B cell (primary cell): ENCODE measurements at regions of chr19 and their contacts with region 1.

Region 1: DNA sequence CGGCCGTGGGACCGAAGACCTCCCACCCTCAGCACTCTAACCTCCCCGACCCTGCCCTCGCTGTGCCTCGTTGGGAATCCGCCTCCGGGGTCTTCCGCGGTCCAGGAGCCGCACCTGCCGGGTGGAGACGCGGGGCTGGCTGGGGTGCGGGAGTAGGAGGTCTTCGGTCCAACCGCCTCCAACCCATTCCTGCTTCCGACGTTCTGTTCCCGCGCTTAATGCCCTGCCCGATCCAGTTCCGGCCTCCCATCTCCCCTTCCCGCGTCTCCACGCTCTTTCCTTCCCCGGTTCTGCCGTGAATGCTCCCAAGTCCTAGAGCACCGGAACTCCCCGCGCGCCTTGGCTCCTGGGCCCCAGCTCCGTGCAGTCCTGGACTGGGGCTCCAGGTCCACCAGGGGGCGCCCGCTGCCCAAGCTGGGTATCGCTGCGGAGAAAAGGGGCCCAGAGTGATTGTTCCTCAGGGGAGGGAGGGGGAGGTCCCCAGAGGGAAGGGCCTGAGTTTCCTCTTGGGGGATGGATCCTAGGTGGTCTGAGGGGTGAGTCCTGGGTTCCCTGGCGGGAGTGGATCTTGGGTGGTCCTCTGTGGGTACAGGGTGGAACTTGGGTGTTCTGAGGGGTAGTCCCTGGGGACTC is 14.1 kb upstream of the TNFSF9 start:
- DNase-seq: peak; percentile 91
- ATAC-seq: peak; percentile 58
- H3K4me3 ChIP-seq: peak overlapping the region; percentile 31 to 74 (median 68)
- H3K4me3 Mint-ChIP-seq: peak overlapping the region; percentile 92
- H3K27ac ChIP-seq: peak overlapping the region in 1 of 2 donors; percentile 16
- H3K27ac Mint-ChIP-seq: peak overlapping the region; percentile 73
- H3K4me1 ChIP-seq: peaks cover 22 to 47% of the 10 kb centered on the region in 2 donors
- H3K4me1 Mint-ChIP-seq: peaks cover 38% of the 10 kb centered on the region
- H3K27me3 ChIP-seq: no peaks in the 10 kb centered on the region
- H3K27me3 Mint-ChIP-seq: no peaks in the 10 kb centered on the region
- CTCF ChIP-seq: peak; percentile 97

Region 2: GRCh38 chr19:6343462-6343861 is 173.3 kb before region 1 on chr19:
- CTCF ChIA-PET with region 1: no interaction called
- POLR2A ChIA-PET with region 1: no interaction called
- intact Hi-C with region 1: no loop called
- DNase-seq: no peak
- ATAC-seq: no peak
- H3K4me3 ChIP-seq: no peak overlapping the region
- H3K4me3 Mint-ChIP-seq: no peak overlapping the region
- H3K27ac ChIP-seq: no peak overlapping the region
- H3K27ac Mint-ChIP-seq: no peak overlapping the region
- H3K4me1 ChIP-seq: peaks cover 0 to 3% of the 10 kb centered on the region in 2 donors
- H3K4me1 Mint-ChIP-seq: peaks cover 3% of the 10 kb centered on the region
- H3K27me3 ChIP-seq: no peaks in the 10 kb centered on the region
- H3K27me3 Mint-ChIP-seq: no peaks in the 10 kb centered on the region
- CTCF ChIP-seq: no peak

Region 3: DNA sequence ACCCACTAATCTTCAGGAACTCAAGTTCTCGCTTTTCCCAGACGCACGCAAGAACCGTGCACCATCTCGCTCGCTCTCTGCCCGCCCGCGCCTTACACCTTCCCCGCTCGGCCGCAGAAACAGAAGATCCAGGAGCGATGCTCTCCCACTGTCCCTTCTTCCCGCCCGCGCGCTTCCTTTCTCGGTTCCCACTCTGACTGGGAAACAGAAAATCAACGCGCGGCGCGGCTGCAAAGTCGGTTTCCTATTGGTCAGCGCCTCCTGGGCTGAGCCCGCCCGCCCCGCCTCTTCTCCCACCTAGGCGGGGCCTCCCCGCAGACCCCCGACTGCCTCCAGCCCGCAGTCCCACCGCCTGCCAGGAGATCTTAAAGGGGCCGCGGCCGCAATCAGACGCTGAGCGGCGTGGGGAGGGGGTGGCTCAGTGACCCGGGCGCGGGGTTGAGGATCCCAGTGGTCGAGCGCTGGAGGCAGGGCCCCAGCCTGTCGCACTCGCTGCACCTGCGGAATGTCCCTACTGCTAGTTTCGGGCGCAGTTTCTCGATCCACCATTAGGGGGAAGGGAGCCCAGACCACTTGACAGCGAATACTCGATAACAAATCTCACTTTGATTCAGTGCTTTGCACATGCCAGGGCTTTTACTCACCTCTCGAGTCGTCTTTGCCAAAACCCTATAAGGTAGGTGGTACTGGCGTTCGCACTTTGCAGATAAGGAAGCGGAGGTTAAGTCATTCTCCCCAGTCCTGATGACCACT is 56.5 kb before region 1 on chr19:
- CTCF ChIA-PET with region 1: interaction called, 3 read pairs
- POLR2A ChIA-PET with region 1: interaction called, 6 read pairs
- intact Hi-C with region 1: loop called (anchors 1 kb)
- DNase-seq: peak; percentile 99
- ATAC-seq: peak; percentile 84
- H3K4me3 ChIP-seq: peak overlapping the region; percentile 60 to 93 (median 78)
- H3K4me3 Mint-ChIP-seq: peak overlapping the region; percentile 91
- H3K27ac ChIP-seq: peak overlapping the region; percentile 76 to 86
- H3K27ac Mint-ChIP-seq: peak overlapping the region; percentile 78
- H3K4me1 ChIP-seq: peaks cover 11 to 34% of the 10 kb centered on the region in 2 donors
- H3K4me1 Mint-ChIP-seq: peaks cover 32% of the 10 kb centered on the region
- H3K27me3 ChIP-seq: peaks cover 0 to 15% (median 6%) of the 10 kb centered on the region in 4 experiments
- H3K27me3 Mint-ChIP-seq: no peaks in the 10 kb centered on the region
- CTCF ChIP-seq: peak; percentile 78

Region 4: GRCh38 chr19:6551607-6552450 is 35.1 kb after region 1 on chr19:
- CTCF ChIA-PET with region 1: interaction called, 16 read pairs
- POLR2A ChIA-PET with region 1: interaction called, 4 read pairs
- intact Hi-C with region 1: loop called (anchors 5 kb)
- DNase-seq: peak; percentile 60
- ATAC-seq: peak; percentile 92
- H3K4me3 ChIP-seq: peak overlapping the region in 2 of 5 experiments; percentile 20 to 36
- H3K4me3 Mint-ChIP-seq: peak overlapping the region; percentile 59
- H3K27ac ChIP-seq: no peak overlapping the region
- H3K27ac Mint-ChIP-seq: peak overlapping the region; percentile 53
- H3K4me1 ChIP-seq: peaks cover 9 to 11% of the 10 kb centered on the region in 2 donors
- H3K4me1 Mint-ChIP-seq: peaks cover 7% of the 10 kb centered on the region
- H3K27me3 ChIP-seq: peaks cover 0 to 2% (median 0%) of the 10 kb centered on the region in 4 experiments
- H3K27me3 Mint-ChIP-seq: no peaks in the 10 kb centered on the region
- CTCF ChIP-seq: peak; percentile 47

Region 5: GRCh38 chr19:6608940-6609339 is 92.2 kb after region 1 on chr19:
- CTCF ChIA-PET with region 1: interaction called, 5 read pairs
- POLR2A ChIA-PET with region 1: interaction called, 10 read pairs
- intact Hi-C with region 1: no loop called
- DNase-seq: no peak
- ATAC-seq: no peak
- H3K4me3 ChIP-seq: no peak overlapping the region
- H3K4me3 Mint-ChIP-seq: no peak overlapping the region
- H3K27ac ChIP-seq: no peak overlapping the region
- H3K27ac Mint-ChIP-seq: no peak overlapping the region
- H3K4me1 ChIP-seq: peaks cover 0 to 2% of the 10 kb centered on the region in 2 donors
- H3K4me1 Mint-ChIP-seq: peaks cover 7% of the 10 kb centered on the region
- H3K27me3 ChIP-seq: peaks cover 0 to 12% (median 3%) of the 10 kb centered on the region in 4 experiments
- H3K27me3 Mint-ChIP-seq: peaks cover 23% of the 10 kb centered on the region
- CTCF ChIP-seq: no peak

Region 6: DNA sequence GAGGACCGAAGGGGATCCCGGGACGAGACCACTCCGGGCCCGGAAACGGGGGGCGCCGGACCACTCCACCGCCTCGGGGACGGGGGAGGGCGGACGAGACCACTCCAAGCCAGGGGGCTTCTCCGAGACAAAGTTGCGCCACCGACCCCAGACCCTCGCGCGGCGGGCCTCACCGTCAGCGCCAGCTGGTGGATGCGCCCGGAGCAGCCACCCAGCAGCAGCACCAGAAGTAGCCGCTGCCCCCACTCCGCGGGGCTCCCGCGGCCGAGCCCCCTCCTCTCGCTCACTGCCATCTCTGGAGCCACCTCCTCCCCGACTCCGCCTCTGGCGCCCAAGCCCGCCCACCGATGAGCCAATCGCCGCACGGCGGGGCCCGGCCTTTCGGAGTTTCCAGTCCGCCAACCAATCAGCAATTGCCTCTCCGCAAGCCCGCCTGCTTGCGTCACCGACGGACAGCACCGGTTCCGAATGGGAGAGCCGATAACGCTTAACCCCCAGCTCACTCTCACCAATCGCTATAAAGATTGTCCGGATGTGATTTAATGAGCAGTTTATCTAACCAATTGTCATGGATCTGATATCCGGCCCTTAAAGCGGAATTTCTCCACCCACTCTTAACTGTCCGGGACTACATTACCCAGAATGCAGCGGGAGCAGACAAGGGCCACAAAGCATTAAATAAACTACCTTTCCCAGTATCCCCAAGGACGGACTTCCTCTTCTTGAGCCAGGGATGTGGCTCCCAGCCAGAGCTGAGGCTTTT is 220.7 kb after region 1 on chr19 and contains the start of gene GPR108:
- CTCF ChIA-PET with region 1: interaction called, 41 read pairs
- POLR2A ChIA-PET with region 1: interaction called, 19 read pairs
- intact Hi-C with region 1: loop called (anchors 1 kb)
- DNase-seq: peak; percentile 99
- ATAC-seq: peak; percentile 73
- H3K4me3 ChIP-seq: peak within 1 kb of the TSS; percentile 69 to 89 (median 88)
- H3K4me3 Mint-ChIP-seq: peak within 1 kb of the TSS; percentile 94
- H3K27ac ChIP-seq: peak within 1 kb of the TSS; percentile 90 to 98
- H3K27ac Mint-ChIP-seq: peak within 1 kb of the TSS; percentile 99
- H3K4me1 ChIP-seq: peaks cover 39 to 51% of the 10 kb centered on the region in 2 donors
- H3K4me1 Mint-ChIP-seq: peaks cover 39% of the 10 kb centered on the region
- H3K27me3 ChIP-seq: no peaks in the 10 kb centered on the region
- H3K27me3 Mint-ChIP-seq: no peaks in the 10 kb centered on the region
- CTCF ChIP-seq: no peak
- total RNA-seq, gene GPR108: 78.8 and 79.0 TPM in 2 replicates

Region 7: GRCh38 chr19:6862673-6863078 is 345.9 kb after region 1 on chr19:
- CTCF ChIA-PET with region 1: interaction called, 52 read pairs
- POLR2A ChIA-PET with region 1: no interaction called
- intact Hi-C with region 1: loop called (anchors 1 kb)
- DNase-seq: peak; percentile 92
- ATAC-seq: peak; percentile 85
- H3K4me3 ChIP-seq: peak overlapping the region in 3 of 5 experiments; percentile 48 to 73 (median 58)
- H3K4me3 Mint-ChIP-seq: peak overlapping the region; percentile 96
- H3K27ac ChIP-seq: peak overlapping the region; percentile 52 to 89
- H3K27ac Mint-ChIP-seq: peak overlapping the region; percentile 92
- H3K4me1 ChIP-seq: peaks cover 0 to 5% of the 10 kb centered on the region in 2 donors
- H3K4me1 Mint-ChIP-seq: peaks cover 11% of the 10 kb centered on the region
- H3K27me3 ChIP-seq: peaks cover 0 to 3% (median 0%) of the 10 kb centered on the region in 4 experiments
- H3K27me3 Mint-ChIP-seq: peaks cover 3% of the 10 kb centered on the region
- CTCF ChIP-seq: peak; percentile 84